ENCODE measurements at regions of chr1 and their contacts with region 1.

Region 1: DNA sequence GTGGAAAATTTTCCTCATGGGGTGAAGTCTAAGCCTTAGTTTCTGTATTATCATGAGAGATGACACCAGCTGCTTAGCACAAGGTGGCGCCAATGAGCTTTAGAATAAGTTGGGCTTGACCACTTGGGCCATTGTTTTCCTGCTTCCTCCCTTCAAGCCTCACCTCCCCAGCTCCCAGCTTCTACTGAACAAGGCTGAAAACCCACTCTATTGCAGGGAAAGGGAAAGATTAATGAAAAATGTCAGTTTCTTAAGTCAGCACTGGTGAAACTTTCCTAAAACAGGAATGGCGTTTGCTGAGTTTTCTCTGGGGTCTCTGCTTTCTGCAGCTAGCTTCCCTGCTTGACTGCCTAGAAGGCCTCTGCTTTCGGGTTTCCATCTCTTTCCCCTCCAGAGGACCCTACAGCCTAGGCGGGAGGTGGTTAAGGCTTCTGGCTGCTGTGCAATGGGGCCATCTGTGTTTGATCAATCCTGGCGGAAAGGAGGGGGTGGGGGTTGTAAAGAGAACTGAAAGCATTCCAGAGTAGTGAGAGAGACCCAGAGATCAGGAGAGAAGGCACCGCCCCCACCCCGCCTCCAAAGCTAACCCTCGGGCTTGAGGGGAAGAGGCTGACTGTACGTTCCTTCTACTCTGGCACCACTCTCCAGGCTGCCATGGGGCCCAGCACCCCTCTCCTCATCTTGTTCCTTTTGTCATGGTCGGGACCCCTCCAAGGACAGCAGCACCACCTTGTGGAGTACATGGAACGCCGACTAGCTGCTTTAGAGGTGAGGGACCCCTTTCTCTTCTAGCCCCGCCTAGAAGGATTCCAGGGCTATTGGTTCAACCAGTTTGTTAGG is at the start of gene OLFML3:
- DNase-seq: peak; percentile 95
- ATAC-seq: peak; percentile 79
- H3K4me3 ChIP-seq: peak within 1 kb of the TSS; percentile 43
- H3K27ac ChIP-seq: peak within 1 kb of the TSS; percentile 94
- H3K4me1 ChIP-seq: peaks cover 31% of the 10 kb centered on the region
- H3K27me3 ChIP-seq: no peaks in the 10 kb centered on the region
- CTCF ChIP-seq: peak; percentile 83
- POLR2A ChIP-seq: peak; percentile 42; the same call in 1 of the 2 replicates
- RAD21 ChIP-seq: peak; percentile 82
- total RNA-seq, gene OLFML3: 37.8 and 40.9 TPM in 2 replicates

Region 2: DNA sequence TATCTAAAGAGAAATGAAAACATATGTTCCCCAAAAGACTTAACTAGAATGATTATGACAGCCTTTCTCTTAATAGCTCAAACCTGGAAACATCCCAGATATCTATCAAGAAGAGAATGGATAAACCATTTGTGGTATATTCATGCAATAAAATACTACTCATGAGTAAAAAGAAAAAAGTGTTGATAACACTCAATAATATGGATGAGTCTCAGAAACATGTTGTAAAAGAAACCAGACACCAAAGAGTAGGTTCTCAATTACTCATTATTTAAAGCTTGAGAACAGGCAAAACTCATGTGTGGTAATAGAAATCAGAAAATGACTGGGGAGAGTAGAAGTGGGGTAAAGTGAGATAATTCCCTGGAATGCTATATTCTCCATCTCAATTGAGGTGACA is 373.9 kb before region 1 on chr1:
- CTCF ChIA-PET with region 1: no interaction called
- POLR2A ChIA-PET with region 1: no interaction called
- dilution Hi-C with region 1: no loop called
- in situ Hi-C with region 1: no loop called
- intact Hi-C with region 1: no loop called
- DNase-seq: no peak
- ATAC-seq: no peak
- H3K4me3 ChIP-seq: no peak overlapping the region
- H3K27ac ChIP-seq: no peak overlapping the region
- H3K4me1 ChIP-seq: no peaks in the 10 kb centered on the region
- H3K27me3 ChIP-seq: no peaks in the 10 kb centered on the region
- CTCF ChIP-seq: no peak
- POLR2A ChIP-seq: no peak
- RAD21 ChIP-seq: no peak

Region 3: DNA sequence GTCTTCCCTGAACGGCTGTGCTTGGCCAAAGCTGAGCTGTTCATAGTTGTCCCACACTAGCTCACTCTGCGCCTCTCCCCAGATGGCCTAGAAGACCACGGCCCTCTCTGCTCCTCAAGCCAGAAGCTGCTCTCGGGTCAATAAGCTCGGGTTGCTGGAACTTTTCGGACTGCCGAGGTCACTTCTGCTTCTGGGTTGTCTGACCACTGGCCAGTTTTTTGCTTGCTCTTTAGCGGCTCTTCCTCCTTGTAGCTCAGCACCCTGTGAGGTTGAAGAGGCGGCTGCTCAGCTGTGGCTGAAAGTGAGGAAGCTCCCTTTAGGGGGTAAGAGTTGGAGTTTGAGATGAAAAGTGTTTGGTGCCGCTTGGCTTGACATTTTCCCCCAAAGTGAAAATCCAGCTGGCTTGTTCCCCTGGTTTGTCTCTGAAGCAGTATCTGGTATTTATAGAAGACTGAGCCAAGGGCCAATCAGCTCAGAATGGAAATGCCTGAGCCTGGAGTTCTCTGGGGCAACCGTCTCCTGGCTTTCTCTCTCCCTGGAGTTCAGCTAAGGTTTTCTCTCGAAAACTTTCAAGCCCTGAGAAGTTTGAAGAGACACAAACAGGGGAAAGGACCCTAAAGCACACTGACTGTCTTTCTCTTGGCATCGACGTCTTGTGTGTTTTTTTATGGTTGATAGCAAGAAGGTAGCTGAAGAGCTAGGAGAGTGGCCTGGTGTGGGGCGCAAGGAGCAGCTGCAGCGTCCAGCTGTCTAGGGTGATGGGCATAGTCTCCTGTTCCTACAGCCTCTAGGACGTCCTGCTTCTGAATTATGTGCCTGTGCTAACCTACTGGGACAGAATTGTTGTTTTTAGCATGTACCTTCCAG is 102.6 kb after region 1 on chr1:
- CTCF ChIA-PET with region 1: no interaction called
- POLR2A ChIA-PET with region 1: no interaction called
- dilution Hi-C with region 1: no loop called
- in situ Hi-C with region 1: no loop called
- intact Hi-C with region 1: no loop called
- DNase-seq: no peak
- ATAC-seq: no peak
- H3K4me3 ChIP-seq: no peak overlapping the region
- H3K27ac ChIP-seq: no peak overlapping the region
- H3K4me1 ChIP-seq: no peaks in the 10 kb centered on the region
- H3K27me3 ChIP-seq: peaks cover 32% of the 10 kb centered on the region
- CTCF ChIP-seq: no peak
- POLR2A ChIP-seq: no peak
- RAD21 ChIP-seq: no peak

Region 4: GRCh38 chr1:114154963-114155322 is 175.9 kb after region 1 on chr1:
- CTCF ChIA-PET with region 1: no interaction called
- POLR2A ChIA-PET with region 1: no interaction called
- dilution Hi-C with region 1: no loop called
- in situ Hi-C with region 1: no loop called
- intact Hi-C with region 1: loop called (anchors 1 kb)
- DNase-seq: no peak
- ATAC-seq: no peak
- H3K4me3 ChIP-seq: no peak overlapping the region
- H3K27ac ChIP-seq: no peak overlapping the region
- H3K4me1 ChIP-seq: no peaks in the 10 kb centered on the region; the same call in 1 of the 2 replicates
- H3K27me3 ChIP-seq: peaks cover 84% of the 10 kb centered on the region
- CTCF ChIP-seq: no peak
- POLR2A ChIP-seq: no peak
- RAD21 ChIP-seq: no peak

Region 5: GRCh38 chr1:114320586-114320985 is 341.5 kb after region 1 on chr1:
- CTCF ChIA-PET with region 1: no interaction called
- POLR2A ChIA-PET with region 1: no interaction called
- dilution Hi-C with region 1: no loop called
- in situ Hi-C with region 1: no loop called
- intact Hi-C with region 1: loop called (anchors 1 kb)
- DNase-seq: peak; percentile 95
- ATAC-seq: peak; percentile 91
- H3K4me3 ChIP-seq: no peak overlapping the region
- H3K27ac ChIP-seq: no peak overlapping the region
- H3K4me1 ChIP-seq: peaks cover 5% of the 10 kb centered on the region
- H3K27me3 ChIP-seq: no peaks in the 10 kb centered on the region
- CTCF ChIP-seq: no peak
- POLR2A ChIP-seq: no peak
- RAD21 ChIP-seq: no peak

Region 6: DNA sequence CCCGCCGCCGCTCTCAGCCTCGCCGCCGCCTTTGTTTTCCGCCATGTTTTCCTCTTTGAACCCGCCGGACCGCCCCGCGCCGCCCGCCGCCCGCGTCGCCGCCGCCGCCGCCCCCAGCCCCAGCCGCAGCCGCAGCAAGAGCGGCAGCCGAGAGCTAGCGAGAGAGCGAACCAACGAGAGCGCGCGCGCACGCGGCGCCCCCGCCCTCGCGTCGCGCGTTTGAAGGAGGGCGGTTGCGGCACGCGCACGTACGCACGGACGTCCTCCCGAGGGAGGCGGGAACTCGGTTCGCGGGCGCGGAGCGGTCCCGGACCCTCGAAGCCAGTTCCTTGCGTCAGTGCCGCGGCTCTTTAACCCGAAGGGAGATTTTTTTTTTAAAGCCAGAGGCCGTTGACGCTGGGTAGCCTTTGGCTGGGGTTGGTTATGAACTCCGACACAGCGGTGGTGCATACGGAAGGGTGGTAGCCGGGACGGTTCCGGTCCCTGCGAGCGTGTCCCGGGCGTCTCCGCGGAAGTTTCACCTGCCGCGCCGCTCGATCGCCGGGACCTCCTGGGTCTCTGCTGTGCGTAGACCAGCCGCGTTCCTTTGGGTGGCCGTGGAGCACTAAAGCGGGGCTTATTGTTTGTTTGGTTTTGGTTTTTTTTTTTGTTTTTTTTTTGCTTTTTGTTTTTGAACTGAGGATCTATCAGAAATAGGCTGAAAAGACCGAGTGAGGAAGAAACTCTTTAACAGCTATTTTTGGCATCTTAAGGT is 532.1 kb after region 1 on chr1 and contains the start of gene TRIM33:
- CTCF ChIA-PET with region 1: interaction called, 3 read pairs
- POLR2A ChIA-PET with region 1: no interaction called
- dilution Hi-C with region 1: no loop called
- in situ Hi-C with region 1: no loop called
- intact Hi-C with region 1: loop called (anchors 5 kb)
- DNase-seq: peak; percentile 94
- ATAC-seq: peak; percentile 92
- H3K4me3 ChIP-seq: peak within 1 kb of the TSS; percentile 82
- H3K27ac ChIP-seq: peak within 1 kb of the TSS; percentile 78
- H3K4me1 ChIP-seq: peaks cover 2% of the 10 kb centered on the region; the same call in 1 of the 2 replicates
- H3K27me3 ChIP-seq: no peaks in the 10 kb centered on the region
- CTCF ChIP-seq: no peak
- POLR2A ChIP-seq: peak; percentile 56; the same call in 1 of the 2 replicates
- RAD21 ChIP-seq: no peak
- total RNA-seq, gene TRIM33: 40.0 and 40.1 TPM in 2 replicates

Region 7: DNA sequence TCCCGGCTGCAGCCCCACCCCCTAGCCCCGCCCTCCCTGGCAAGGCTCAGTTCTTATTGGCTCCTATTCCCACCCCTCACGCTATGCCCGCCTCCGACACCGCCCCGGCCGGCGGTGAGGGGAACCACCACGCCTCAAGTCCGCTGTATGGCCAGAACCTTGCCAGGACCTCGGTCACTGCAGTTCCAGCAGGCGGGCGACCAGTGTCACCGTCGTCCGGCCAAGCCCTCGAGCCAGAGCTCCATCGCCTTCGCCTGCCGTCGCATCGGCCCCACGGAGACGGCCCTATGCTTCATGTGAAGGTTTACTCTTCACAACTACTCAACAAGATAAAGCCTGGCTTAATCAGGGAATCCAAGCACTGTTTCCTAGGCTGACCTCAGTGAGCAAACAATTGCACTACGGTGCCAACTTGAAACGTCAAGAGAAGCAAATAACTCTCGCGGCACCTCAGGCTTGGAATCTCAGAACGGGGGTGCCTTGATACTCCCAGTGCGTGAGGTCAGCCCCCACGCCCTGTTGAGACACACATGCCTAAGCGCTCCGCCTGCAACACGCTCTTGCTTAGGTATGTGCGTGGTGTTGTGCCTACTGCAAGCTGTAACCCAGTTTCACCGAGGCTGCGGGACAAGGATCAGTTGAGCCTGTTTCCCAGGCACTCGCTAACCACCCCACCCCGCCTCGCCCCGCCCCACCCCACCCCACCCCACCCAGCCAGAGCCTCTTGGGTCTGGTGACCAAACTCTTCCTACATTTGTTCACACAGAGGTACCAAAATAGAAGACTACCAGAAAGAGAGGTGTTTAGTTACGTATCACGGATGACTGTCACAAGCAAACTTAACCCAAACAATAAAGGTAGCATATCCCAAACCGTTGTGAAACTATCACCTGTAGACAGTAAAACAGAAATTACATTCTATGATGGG is 691.3 kb after region 1 on chr1:
- CTCF ChIA-PET with region 1: no interaction called
- POLR2A ChIA-PET with region 1: no interaction called
- dilution Hi-C with region 1: no loop called
- in situ Hi-C with region 1: no loop called
- intact Hi-C with region 1: loop called (anchors 2 kb)
- DNase-seq: peak; percentile 80
- ATAC-seq: peak; percentile 99
- H3K4me3 ChIP-seq: peak overlapping the region; percentile 92
- H3K27ac ChIP-seq: no peak overlapping the region
- H3K4me1 ChIP-seq: no peaks in the 10 kb centered on the region
- H3K27me3 ChIP-seq: peaks cover 5% of the 10 kb centered on the region
- CTCF ChIP-seq: no peak
- POLR2A ChIP-seq: peak; percentile 59; the same call in 1 of the 2 replicates
- RAD21 ChIP-seq: no peak

Region 8: DNA sequence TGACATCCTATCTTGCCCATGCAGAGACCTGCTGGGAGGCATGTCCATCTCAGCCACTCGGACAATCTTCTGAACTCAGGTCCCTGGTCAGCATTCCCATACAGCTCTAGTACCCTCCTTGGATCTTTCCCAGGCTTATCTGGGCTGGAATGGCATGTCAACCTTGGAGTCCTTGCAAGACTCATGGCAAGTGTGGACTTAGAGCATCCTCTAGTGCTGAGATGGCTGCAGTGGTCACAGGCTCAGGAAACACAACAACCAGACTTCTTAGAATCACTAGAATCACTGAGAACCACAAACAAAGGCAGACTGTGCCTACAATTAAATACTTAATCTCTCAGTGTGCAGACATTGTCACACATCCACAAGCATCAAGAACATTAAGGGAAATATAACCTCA is 977.5 kb after region 1 on chr1:
- CTCF ChIA-PET with region 1: interaction called, 3 read pairs
- POLR2A ChIA-PET with region 1: no interaction called
- dilution Hi-C with region 1: no loop called
- in situ Hi-C with region 1: no loop called
- intact Hi-C with region 1: loop called (anchors 5 kb)
- DNase-seq: no peak
- ATAC-seq: no peak
- H3K4me3 ChIP-seq: no peak overlapping the region
- H3K27ac ChIP-seq: no peak overlapping the region
- H3K4me1 ChIP-seq: no peaks in the 10 kb centered on the region
- H3K27me3 ChIP-seq: no peaks in the 10 kb centered on the region
- CTCF ChIP-seq: 0 out of 2 replicates have a peak, but pooled peaks have one; percentile 20
- POLR2A ChIP-seq: no peak
- RAD21 ChIP-seq: peak; percentile 28; the same call in 1 of the 2 replicates

Measured in IMR-90 (cell line).